ENCODE measurements at regions of chr17 and their contacts with region 1.

Region 1: DNA sequence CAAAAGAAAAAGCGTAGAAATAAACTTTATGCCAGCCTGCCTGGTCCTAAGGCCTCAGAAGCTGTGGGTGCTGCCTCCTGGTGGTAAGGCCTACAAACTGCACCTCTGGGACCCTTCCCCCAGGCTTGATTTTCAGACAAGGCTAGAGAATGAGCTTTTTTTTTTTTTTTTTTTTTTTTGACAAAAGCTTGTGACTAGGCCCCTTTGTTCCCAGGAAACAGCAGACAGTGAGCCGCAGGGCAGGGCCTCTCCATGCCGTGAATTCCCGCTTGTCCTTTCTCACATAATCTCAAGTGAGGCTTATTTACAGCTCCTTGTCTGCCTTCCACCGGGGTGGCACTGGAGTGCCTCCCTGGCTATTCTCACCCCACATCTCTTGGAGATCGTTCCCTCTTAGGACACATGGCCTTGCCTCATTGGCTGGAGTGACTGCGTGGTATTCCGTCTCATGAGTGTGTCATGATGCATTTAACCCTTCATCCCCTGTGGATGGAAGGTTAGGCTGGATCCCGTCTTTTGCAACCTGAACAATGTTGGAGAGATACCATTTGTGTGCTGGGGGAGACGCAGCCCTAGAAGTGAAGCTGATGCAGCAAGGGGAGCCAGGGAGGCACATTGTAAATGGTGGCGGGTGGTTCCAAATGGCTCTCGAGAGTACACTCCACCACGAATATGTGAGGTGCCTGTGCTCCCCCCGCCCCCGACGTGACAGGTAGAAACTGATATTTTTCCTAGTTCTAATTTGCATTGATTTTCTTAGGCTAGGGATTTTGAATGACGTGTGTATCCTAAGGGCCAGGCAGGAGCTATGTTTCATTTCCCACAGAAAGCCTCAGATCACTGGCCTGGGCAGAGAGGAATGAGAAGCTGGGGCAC is 49.6 kb downstream of the USP22 start:
- DNase-seq: peak; percentile 86
- ATAC-seq: peak; percentile 41
- H3K4me3 Mint-ChIP-seq: no peak overlapping the region
- H3K27ac Mint-ChIP-seq: peak overlapping the region; percentile 87
- H3K4me1 Mint-ChIP-seq: peaks cover 11% of the 10 kb centered on the region
- H3K27me3 Mint-ChIP-seq: no peaks in the 10 kb centered on the region
- CTCF ChIP-seq: peak; percentile 84

Region 2: DNA sequence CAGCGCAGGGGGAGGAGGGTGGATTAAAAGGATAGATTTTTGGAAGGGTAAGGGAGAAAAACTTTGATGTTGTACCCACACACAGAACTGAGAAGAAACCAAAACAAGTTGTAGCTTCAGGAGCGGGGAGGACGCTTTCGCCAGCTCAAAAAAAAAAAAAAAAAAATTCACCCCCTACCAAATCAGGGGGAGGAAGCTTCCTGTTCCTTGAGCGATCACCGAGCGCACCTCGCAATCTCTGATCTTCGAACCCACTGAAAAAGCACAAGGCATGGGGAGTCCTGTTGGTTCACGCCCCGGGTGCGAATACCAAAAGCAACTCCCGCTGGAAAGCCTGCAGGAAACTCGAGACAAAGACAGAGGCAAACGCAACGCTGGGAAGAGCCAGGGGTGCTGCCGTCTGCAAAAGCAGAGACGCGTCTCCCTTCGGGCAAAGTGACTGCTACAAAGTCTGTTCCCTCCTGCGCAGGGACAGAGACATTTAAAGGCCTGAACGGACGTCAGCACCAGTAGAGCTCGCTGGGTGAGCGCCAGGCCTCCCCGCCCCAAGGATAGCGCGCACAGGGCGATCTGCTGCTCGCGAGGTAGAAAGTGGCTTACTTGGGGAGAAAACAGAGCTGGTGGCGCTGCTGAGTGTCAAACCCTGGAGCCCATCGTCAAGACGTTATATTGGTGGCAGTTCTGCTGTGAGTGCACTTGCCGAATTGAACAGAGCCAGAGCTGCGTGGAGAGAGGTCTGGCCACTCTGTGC is 140.8 kb before region 1 on chr17:
- CTCF ChIA-PET with region 1: interaction called, 13 read pairs
- POLR2A ChIA-PET with region 1: no interaction called
- DNase-seq: peak; percentile 66
- ATAC-seq: peak; percentile 77
- H3K4me3 Mint-ChIP-seq: no peak overlapping the region; the same call in 1 of the 2 replicates
- H3K27ac Mint-ChIP-seq: peak overlapping the region; percentile 30; the same call in 1 of the 2 replicates
- H3K4me1 Mint-ChIP-seq: peaks cover 20% of the 10 kb centered on the region
- H3K27me3 Mint-ChIP-seq: peaks cover 27% of the 10 kb centered on the region
- CTCF ChIP-seq: no peak

Region 3: DNA sequence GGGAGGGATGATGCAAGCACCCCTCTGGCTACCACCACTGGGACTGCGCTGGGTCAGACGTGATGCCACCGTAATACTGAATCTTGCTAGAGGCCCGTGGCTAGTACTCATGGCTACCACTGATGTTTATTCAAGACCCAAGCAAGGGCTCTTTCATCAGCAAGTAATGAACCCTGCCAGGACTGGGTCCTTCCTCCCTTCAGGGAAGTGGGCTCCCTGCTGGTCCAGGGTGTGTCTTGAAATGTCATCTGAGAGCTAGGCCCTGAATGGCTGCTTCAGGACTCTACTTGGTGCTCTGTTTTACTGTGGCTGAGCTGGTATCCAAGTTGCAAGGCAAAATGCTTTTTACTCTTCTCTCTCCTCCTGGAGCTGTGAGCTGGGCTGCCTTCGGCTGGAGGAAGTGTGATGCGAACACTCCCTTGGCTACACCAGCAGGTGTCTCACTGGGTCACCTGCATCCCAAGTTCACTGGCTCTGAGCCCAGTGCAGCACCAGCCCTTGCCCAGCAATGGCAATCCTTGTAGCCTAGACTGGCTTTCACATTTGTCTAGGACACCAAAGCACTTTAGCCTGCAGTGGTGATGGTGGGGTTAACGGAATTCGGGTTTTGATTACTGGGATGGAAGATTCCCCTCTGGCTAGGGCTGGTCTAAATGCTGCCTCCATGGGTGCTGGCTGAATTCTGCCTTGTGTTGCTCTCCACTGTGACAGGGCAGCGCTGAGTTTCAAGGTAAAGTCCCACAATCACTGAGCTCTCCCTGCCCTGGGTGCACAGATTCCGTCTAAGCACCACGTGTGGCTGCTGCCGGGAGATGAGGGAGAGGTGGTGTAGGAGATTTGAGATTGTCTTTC is 49.0 kb before region 1 on chr17:
- CTCF ChIA-PET with region 1: interaction called, 50 read pairs
- POLR2A ChIA-PET with region 1: interaction called, 3 read pairs
- DNase-seq: peak; percentile 68
- ATAC-seq: peak; percentile 98
- H3K4me3 Mint-ChIP-seq: no peak overlapping the region
- H3K27ac Mint-ChIP-seq: peak overlapping the region; percentile 90
- H3K4me1 Mint-ChIP-seq: peaks cover 18% of the 10 kb centered on the region
- H3K27me3 Mint-ChIP-seq: no peaks in the 10 kb centered on the region
- CTCF ChIP-seq: peak; percentile 46; the same call in 1 of the 2 replicates

Region 4: DNA sequence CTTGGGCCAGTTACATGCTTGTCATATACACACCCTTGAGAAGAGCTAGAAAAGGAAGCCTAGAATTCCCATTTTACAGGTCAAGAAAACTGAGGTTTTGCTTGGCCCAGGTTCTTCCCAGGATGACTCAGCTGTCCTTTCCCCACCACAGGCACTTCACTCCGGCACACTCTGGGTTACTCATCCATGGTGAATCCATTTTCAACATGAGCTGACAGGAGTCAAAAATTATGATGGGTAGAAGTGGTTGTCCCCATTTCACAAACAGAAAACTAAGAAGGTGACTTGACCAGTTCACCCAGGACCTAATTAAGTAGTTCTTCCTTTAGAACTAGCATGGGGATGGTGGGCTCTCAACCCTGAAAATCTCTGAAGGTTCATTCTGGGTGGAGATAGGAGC is 17.7 kb before region 1 on chr17:
- CTCF ChIA-PET with region 1: interaction called, 26 read pairs
- POLR2A ChIA-PET with region 1: no interaction called
- DNase-seq: no peak
- ATAC-seq: no peak
- H3K4me3 Mint-ChIP-seq: no peak overlapping the region
- H3K27ac Mint-ChIP-seq: no peak overlapping the region
- H3K4me1 Mint-ChIP-seq: no peaks in the 10 kb centered on the region
- H3K27me3 Mint-ChIP-seq: no peaks in the 10 kb centered on the region
- CTCF ChIP-seq: no peak

Region 5: GRCh38 chr17:21098934-21099689 is 105.9 kb after region 1 on chr17:
- CTCF ChIA-PET with region 1: interaction called, 14 read pairs
- POLR2A ChIA-PET with region 1: no interaction called
- DNase-seq: peak; percentile 81
- ATAC-seq: peak; percentile 95
- H3K4me3 Mint-ChIP-seq: peak overlapping the region; percentile 97
- H3K27ac Mint-ChIP-seq: peak overlapping the region; percentile 99
- H3K4me1 Mint-ChIP-seq: no peaks in the 10 kb centered on the region
- H3K27me3 Mint-ChIP-seq: no peaks in the 10 kb centered on the region
- CTCF ChIP-seq: no peak

Region 6: DNA sequence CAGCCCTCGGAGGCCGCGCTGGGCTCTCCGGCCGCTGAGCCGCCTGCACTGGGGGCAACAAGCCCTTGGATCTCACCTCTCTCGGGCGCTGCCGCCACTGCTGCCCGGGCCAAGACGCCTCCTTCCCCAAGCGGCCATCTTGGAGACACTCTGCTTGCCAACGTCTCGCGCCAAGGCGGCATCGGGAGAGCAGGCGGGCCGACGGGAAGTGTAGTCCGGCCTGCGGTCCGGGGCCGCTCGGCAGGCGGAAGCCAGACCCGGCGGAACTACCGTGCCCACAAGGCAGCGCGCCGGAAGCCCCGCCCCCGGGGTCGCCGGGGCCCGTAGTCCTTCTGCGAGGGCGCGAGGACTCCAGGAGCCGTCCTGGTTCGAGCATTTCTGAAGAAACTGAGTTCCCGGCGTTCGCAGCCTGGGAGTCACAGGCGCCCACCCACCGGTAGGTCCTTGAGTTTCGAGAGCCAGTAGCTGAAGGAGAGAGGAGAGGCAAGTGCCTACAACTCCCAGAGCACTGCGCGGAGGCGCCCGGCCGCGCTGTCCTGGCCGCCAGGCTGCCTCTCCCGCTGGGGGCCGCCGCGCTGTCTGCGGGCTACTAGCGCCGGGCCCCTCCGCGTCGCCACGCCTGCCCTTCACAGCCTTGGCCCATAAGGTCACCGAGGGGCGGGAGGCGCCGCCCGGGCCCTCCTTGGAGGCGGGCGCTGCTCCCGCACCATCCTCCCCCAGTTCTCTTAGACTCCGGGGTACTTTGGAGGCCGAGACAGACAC is 221.0 kb after region 1 on chr17 and contains the start of gene TMEM11:
- CTCF ChIA-PET with region 1: no interaction called
- POLR2A ChIA-PET with region 1: no interaction called
- DNase-seq: peak; percentile 97
- ATAC-seq: peak; percentile 89
- H3K4me3 Mint-ChIP-seq: peak within 1 kb of the TSS; percentile 96
- H3K27ac Mint-ChIP-seq: peak within 1 kb of the TSS; percentile 98
- H3K4me1 Mint-ChIP-seq: peaks cover 39% of the 10 kb centered on the region
- H3K27me3 Mint-ChIP-seq: no peaks in the 10 kb centered on the region; the same call in 1 of the 2 replicates
- CTCF ChIP-seq: no peak
- total RNA-seq, gene TMEM11: 32.9 to 37.0 TPM (median 33.9 TPM) in 3 replicates